Calu3 (cell line): ENCODE measurements at regions of chr12 and their contacts with region 1.

Region 1: GRCh38 chr12:55647027-55647426 is 10.3 kb downstream of the OR10P1 start:
- DNase-seq: no peak
- H3K4me3 Mint-ChIP-seq: no peak overlapping the region
- H3K27ac Mint-ChIP-seq: peak overlapping the region; percentile 14
- H3K4me1 Mint-ChIP-seq: peaks cover 17% of the 10 kb centered on the region
- H3K27me3 Mint-ChIP-seq: peaks cover 23% of the 10 kb centered on the region
- CTCF ChIP-seq: no peak

Region 2: DNA sequence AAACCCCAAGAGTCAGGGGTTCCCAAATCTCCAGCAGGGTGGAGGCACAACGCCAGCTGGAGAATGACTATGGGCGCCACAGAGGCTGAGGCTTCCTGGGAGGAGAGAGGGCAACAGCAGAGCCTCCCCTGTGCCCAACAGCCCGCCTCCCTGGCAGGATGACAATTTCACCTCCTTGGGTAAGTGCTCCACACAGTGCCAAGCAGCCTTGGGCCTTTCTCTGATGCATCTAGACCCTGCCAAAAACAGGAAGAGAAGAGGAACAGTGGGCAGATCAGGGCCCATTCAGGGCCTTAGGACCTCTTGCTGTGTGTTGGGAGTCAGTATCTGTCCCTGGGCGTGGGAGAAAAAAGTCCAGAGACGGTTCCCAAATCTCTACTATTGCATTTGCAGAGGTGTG is 15.3 kb before region 1 on chr12:
- CTCF ChIA-PET with region 1: no interaction called
- intact Hi-C with region 1: no loop called
- DNase-seq: no peak
- H3K4me3 Mint-ChIP-seq: no peak overlapping the region
- H3K27ac Mint-ChIP-seq: no peak overlapping the region
- H3K4me1 Mint-ChIP-seq: no peaks in the 10 kb centered on the region
- H3K27me3 Mint-ChIP-seq: peaks cover 62% of the 10 kb centered on the region
- CTCF ChIP-seq: no peak

Region 3: GRCh38 chr12:55659486-55660385 is 12.7 kb after region 1 on chr12:
- CTCF ChIA-PET with region 1: interaction called, 20 read pairs
- intact Hi-C with region 1: no loop called
- DNase-seq: peak; percentile 58
- H3K4me3 Mint-ChIP-seq: no peak overlapping the region
- H3K27ac Mint-ChIP-seq: no peak overlapping the region
- H3K4me1 Mint-ChIP-seq: peaks cover 29% of the 10 kb centered on the region
- H3K27me3 Mint-ChIP-seq: peaks cover 4% of the 10 kb centered on the region
- CTCF ChIP-seq: peak; percentile 53